Mammary epithelial cell (primary cell): ENCODE measurements at regions of chr3 and their contacts with region 1.

Region 1: DNA sequence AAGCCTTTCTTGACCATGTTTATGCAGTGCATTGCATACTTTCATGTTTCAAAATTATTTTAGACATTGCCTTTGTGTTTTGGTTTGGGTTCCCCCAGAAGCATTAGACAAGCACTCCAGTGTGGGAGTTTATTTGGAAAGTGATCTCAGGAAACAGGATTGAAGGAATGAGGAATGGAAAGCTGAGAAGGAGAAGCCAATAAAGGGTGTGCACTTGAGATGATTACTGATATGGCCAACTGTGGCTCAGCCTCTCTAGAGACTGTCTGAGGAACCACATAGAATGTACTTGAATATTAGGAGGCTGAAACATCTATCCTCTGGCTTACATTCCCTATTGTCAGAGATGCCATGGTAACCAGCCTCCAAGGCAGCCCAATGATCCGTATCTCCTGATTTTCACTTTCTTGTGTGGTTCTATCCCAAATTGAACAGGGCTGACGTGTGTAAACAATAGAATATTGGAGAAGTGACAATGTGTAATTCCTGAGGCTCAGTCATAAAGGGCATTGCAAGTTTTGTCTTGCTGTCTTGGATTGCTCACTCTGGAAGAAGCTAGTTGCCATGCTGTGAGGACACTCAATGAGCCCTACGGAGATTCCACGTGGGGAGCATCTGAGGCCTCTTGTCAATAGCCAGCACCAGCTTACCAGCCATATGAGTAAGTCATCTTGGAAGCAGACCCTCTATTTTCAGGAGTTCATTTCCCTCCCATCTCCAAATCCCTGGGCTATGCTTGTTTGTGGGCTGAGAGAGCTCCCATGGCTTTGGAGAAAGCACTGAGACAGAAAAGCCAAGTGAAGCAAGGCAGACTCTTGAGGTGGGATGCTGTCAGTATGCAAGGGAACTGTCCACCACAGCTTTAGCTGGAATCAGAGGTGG is 84.7 kb downstream of the SCN11A start:
- DNase-seq: peak; percentile 76
- H3K4me3 ChIP-seq: no peak overlapping the region
- H3K27ac ChIP-seq: no peak overlapping the region
- H3K4me1 ChIP-seq: peaks cover 11% of the 10 kb centered on the region
- H3K27me3 ChIP-seq: no peaks in the 10 kb centered on the region
- CTCF ChIP-seq: no peak

Region 2: DNA sequence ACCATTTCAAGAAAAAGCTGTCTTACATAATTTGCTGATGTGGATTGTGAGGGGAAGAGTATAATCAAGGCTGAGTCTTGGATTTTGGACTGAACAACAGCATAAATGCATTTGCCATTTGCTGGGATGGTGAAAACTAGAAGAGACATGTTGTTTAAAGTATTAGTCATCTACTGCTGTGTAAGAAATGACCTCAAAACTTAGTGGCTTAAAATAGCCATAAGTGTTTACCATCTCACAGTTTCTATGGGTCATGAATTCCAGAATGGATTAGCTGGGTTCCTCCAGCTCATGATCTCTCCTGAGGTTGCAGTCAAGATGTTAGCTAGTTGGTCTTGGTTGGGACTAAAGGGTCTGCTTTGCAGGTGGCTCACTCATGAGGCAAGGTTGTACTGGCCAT is 18.5 kb after region 1 on chr3:
- CTCF ChIA-PET with region 1: interaction called, 4 read pairs
- dilution Hi-C with region 1: no loop called
- in situ Hi-C with region 1: no loop called
- intact Hi-C with region 1: loop called (anchors 2 kb)
- DNase-seq: peak; percentile 85
- H3K4me3 ChIP-seq: no peak overlapping the region
- H3K27ac ChIP-seq: no peak overlapping the region
- H3K4me1 ChIP-seq: peaks cover 14% of the 10 kb centered on the region
- H3K27me3 ChIP-seq: no peaks in the 10 kb centered on the region
- CTCF ChIP-seq: no peak

Region 3: GRCh38 chr3:39180546-39181346 is 213.7 kb after region 1 on chr3:
- CTCF ChIA-PET with region 1: no interaction called
- dilution Hi-C with region 1: no loop called
- in situ Hi-C with region 1: no loop called
- intact Hi-C with region 1: no loop called
- DNase-seq: peak; percentile 86
- H3K4me3 ChIP-seq: peak overlapping the region; percentile 6 to 36 (median 22)
- H3K27ac ChIP-seq: peak overlapping the region; percentile 58
- H3K4me1 ChIP-seq: peaks cover 36% of the 10 kb centered on the region
- H3K27me3 ChIP-seq: no peaks in the 10 kb centered on the region
- CTCF ChIP-seq: peak in 1 of 2 donors; percentile 37